ENCODE measurements at regions of chr4 and their contacts with region 1.

Region 1: DNA sequence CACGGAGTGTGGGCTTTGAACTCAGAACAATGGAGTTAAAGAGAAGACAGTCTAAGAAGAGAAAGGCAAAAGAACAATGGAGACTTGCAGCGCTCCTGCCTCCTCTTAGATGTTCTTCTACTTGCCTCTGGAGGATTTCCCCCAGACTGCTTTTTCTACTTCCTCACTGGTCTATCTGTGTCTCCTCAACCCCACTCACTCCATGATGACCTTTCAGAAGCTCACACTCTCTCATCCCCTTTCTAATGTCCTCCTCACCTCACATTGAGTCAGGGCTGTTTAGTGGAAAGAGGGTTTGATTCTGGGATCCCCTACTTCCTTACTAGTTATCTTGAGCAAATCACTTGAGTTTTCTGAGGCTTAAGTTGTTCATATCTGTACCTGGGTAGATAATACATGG is 12.2 kb upstream of the HERC6 start:
- DNase-seq: no peak
- ATAC-seq: no peak
- H3K4me3 ChIP-seq: no peak overlapping the region
- H3K27ac ChIP-seq: no peak overlapping the region
- H3K4me1 ChIP-seq: no peaks in the 10 kb centered on the region
- H3K27me3 ChIP-seq: no peaks in the 10 kb centered on the region
- CTCF ChIP-seq: no peak

Region 2: DNA sequence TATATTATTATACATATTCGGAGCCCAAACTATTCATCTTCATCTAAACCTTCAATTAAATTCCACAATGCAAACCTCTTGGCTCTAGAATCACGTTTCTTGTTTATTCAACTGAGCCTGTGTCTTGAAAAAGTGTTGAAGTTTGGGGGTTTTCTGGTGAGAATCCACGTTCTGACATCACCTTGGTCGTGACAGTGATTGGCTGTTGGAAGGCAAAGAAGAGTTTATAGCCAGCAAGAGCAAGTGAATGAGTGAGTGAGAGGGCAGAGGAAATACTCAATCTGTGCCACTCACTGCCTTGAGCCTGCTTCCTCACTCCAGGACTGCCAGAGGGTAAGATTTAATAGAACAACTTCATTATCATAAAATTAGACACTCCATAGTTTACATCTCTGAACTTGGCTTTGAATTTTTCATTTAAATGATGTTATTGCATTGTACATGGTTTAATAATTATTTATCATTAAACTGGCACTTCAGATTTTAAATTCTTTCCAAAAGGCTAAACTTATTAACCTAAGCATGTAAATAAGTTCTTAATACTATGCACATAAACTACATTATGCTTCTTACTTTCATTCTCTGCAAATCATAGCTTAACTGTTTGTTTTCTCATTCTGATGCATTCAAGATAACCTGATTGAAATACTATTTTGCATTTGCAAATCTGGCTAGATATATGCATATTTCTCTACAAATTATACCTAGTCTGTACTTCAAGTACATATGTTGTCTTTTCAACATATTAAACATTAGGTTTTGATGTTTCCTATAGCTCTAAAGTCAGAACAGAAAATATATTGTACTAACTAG is 567.0 kb before region 1 on chr4 and contains the start of gene IBSP:
- CTCF ChIA-PET with region 1: no interaction called
- POLR2A ChIA-PET with region 1: no interaction called
- in situ Hi-C with region 1: no loop called
- intact Hi-C with region 1: no loop called
- DNase-seq: no peak
- ATAC-seq: no peak
- H3K4me3 ChIP-seq: no peak within 1 kb of the TSS
- H3K27ac ChIP-seq: no peak within 1 kb of the TSS
- H3K4me1 ChIP-seq: no peaks in the 10 kb centered on the region
- H3K27me3 ChIP-seq: no peaks in the 10 kb centered on the region
- CTCF ChIP-seq: no peak
- total RNA-seq, gene IBSP: not detected

Region 3: DNA sequence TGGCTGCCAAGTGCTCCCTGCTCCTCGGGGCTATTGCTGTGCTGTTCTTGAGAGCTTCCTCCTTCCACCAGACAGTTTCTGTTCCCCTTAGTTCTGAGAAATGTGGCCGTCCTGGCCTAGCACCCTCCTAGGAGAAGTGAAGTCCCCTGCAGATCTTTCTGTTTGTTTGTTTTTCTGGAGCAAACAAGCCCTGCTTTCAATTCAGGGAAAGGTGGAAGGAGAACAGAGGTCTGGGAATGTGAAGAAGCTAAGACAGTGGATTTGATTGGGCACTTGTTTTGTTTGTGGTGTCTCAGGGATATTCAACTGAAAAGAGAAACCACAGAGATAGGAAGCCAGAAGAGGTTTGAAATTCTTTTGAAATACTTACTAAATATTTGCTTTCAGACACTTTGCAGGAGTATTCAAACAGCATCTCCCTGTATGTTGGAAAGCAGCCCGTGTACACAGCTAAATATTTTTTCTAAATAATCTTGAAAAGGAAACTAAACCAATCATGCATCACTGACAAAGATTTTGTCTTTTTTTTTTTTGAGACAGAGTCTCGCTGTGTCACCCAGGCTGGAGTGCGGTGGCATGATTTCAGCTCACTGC is 45.6 kb before region 1 on chr4:
- CTCF ChIA-PET with region 1: no interaction called
- POLR2A ChIA-PET with region 1: interaction called, 13 read pairs
- in situ Hi-C with region 1: no loop called
- intact Hi-C with region 1: no loop called
- DNase-seq: no peak
- ATAC-seq: peak; percentile 53; the same call in 1 of the 2 replicates
- H3K4me3 ChIP-seq: no peak overlapping the region
- H3K27ac ChIP-seq: no peak overlapping the region
- H3K4me1 ChIP-seq: no peaks in the 10 kb centered on the region
- H3K27me3 ChIP-seq: no peaks in the 10 kb centered on the region
- CTCF ChIP-seq: no peak

Region 4: GRCh38 chr4:88429401-88429800 is 62.9 kb after region 1 on chr4:
- CTCF ChIA-PET with region 1: no interaction called
- POLR2A ChIA-PET with region 1: no interaction called
- in situ Hi-C with region 1: no loop called
- intact Hi-C with region 1: no loop called
- DNase-seq: no peak
- ATAC-seq: no peak
- H3K4me3 ChIP-seq: no peak overlapping the region
- H3K27ac ChIP-seq: no peak overlapping the region
- H3K4me1 ChIP-seq: no peaks in the 10 kb centered on the region
- H3K27me3 ChIP-seq: no peaks in the 10 kb centered on the region
- CTCF ChIP-seq: no peak

Region 5: DNA sequence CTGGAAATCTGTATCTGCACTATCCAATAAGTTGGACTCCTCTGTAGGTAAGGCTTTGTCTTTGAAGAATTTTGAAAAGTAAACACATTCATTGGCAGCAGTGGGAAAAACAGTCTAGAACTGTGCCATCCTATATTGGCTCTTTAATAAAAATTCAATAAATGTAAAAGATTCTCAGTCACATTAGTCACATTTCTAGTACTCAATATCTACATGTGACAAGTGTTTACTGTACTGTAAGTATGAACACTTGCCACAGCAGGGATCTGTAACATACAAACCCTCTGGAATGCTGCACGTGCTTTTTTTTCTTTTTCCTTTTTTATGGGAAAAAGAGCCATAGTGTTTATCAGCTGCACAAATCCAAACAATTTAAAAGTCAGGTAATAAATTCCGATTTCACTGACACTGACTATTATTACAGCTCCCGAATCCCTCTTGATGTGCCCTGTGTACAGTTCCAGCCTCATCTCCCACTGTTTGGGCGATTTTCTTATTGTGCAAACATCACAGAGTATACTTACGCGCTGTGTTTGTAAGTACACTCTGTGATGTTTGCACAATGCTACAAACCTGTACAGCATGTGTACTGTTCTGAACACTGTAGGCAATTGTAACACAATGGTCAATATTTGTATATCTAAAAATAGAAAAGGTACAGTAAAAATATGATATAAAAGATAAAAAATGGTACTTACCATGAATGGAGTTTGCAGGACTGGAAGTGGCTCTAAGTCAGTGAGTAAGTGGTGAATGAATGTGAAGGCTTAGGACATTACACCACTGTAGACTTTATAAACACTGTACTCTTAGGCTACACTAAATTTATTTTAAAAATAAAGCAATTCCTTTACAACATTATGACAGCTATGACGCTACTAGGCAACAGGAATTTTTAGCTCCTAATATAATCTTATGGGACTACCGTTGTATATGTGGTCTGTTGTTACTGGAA is 148.4 kb after region 1 on chr4:
- CTCF ChIA-PET with region 1: interaction called, 3 read pairs
- POLR2A ChIA-PET with region 1: no interaction called
- in situ Hi-C with region 1: no loop called
- intact Hi-C with region 1: loop called (anchors 5 kb)
- DNase-seq: no peak
- ATAC-seq: no peak
- H3K4me3 ChIP-seq: no peak overlapping the region
- H3K27ac ChIP-seq: no peak overlapping the region
- H3K4me1 ChIP-seq: no peaks in the 10 kb centered on the region
- H3K27me3 ChIP-seq: no peaks in the 10 kb centered on the region
- CTCF ChIP-seq: no peak

Measured in Panc1 (cell line).